ENCODE measurements at regions of chr3 and their contacts with region 1.

Region 1: DNA sequence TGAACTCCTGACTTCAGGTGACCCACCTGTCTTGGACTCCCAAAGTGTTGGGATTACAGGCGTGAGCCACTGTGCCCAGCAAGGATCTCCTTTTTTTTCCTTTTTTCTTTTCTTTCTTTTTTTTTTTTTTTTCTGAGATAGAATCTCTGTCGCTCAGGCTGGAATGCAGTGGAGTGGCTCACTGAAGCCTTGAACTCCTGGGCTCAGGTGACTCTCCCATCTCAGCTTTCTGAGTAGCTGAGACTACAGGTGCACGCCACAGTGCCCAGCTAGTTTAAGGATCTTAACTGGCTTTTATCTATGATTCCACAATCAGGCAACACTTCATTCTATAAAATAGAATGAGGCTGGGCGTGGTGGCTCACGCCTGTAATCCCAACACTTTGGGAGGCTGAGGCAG is 16.3 kb upstream of the NICN1 start:
- DNase-seq: no peak
- H3K4me3 ChIP-seq: no peak overlapping the region
- H3K27ac ChIP-seq: no peak overlapping the region
- H3K4me1 ChIP-seq: no peaks in the 10 kb centered on the region
- H3K27me3 ChIP-seq: no peaks in the 10 kb centered on the region
- CTCF ChIP-seq: no peak

Region 2: DNA sequence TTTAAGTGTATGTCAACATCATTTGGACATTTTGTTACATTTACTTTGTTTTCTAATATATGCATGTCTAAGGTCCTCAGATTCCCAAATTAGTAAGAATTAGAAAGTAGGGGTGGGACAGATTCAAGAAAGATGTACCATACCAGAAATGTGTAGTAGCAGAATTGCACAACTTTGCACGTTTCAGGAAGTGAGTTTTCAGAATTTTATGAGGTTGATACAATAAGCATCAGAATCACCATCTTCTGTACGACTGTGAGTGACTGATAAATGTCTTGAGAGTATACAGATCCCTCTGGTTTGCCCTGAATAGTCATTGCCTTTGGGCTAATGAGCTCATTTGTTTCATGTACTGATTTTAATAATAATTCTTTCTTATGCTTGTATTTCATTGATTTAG is 517.5 kb before region 1 on chr3:
- CTCF ChIA-PET with region 1: no interaction called
- POLR2A ChIA-PET with region 1: no interaction called
- intact Hi-C with region 1: no loop called
- DNase-seq: peak; percentile 3
- H3K4me3 ChIP-seq: no peak overlapping the region
- H3K27ac ChIP-seq: no peak overlapping the region
- H3K4me1 ChIP-seq: peaks cover 7% of the 10 kb centered on the region
- H3K27me3 ChIP-seq: no peaks in the 10 kb centered on the region
- CTCF ChIP-seq: no peak

Region 3: DNA sequence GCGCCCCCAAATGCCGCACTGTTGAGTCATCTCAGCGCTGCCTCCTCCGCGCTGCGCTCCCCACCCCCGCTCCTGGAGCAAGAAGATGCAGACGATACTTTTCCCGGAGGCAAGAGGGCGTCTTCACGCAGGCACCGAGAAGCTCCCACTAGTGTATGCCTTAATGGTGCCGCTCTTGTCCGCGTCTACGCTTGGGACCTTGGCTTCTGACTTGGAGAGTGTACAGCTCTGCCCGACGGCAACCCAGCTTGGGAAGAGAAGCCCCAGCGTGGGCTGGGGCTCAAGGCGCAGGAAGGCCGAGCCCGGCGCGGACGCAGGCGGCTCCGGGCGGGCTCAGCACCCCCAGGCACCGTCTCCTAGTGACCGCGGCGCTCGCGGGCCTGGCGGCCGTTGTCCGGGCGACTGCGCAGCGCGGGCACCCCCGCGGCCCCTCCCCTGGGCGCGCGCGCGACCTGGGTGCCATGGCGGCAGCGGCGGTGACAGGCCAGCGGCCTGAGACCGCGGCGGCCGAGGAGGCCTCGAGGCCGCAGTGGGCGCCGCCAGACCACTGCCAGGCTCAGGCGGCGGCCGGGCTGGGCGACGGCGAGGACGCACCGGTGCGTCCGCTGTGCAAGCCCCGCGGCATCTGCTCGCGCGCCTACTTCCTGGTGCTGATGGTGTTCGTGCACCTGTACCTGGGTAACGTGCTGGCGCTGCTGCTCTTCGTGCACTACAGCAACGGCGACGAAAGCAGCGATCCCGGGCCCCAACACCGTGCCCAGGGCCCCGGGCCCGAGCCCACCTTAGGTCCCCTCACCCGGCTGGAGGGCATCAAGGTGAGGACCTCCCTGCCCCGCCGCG is 455.4 kb before region 1 on chr3 and contains the start of gene P4HTM:
- CTCF ChIA-PET with region 1: interaction called, 4 read pairs
- POLR2A ChIA-PET with region 1: no interaction called
- intact Hi-C with region 1: loop called (anchors 5 kb)
- DNase-seq: peak; percentile 85
- H3K4me3 ChIP-seq: peak within 1 kb of the TSS; percentile 64
- H3K27ac ChIP-seq: peak within 1 kb of the TSS; percentile 75
- H3K4me1 ChIP-seq: peaks cover 3% of the 10 kb centered on the region
- H3K27me3 ChIP-seq: no peaks in the 10 kb centered on the region
- CTCF ChIP-seq: peak; percentile 43
- total RNA-seq, gene P4HTM: 13.3 and 14.9 TPM in 2 replicates

Region 4: DNA sequence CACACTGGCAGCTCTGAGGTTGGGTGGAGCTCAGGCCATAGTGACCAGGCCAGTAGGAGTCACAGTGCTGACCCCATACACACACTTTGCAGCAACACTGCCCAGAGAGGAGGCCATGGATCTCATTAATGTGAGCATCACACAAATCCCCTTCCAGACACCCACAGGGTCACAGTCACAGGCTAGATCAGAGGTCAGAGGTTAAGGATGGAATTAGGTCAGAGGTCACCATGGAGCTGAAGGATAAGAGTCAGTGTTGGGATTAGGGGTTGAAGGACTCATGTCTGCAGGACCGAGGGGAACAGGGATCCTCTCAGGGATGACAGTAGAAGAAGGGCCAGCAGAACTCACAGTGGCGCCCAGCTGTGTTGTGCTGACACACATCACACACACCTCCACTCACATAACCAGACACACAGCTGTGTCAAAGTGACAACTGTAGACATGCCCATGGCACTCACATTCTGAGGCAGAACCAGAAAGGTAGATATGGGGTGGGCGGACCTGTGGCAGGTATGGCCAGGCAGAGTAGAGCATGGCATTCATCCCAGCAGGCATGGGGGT is 291.9 kb before region 1 on chr3:
- CTCF ChIA-PET with region 1: no interaction called
- POLR2A ChIA-PET with region 1: no interaction called
- intact Hi-C with region 1: no loop called
- DNase-seq: no peak
- H3K4me3 ChIP-seq: no peak overlapping the region
- H3K27ac ChIP-seq: no peak overlapping the region
- H3K4me1 ChIP-seq: no peaks in the 10 kb centered on the region
- H3K27me3 ChIP-seq: no peaks in the 10 kb centered on the region
- CTCF ChIP-seq: no peak

Region 5: DNA sequence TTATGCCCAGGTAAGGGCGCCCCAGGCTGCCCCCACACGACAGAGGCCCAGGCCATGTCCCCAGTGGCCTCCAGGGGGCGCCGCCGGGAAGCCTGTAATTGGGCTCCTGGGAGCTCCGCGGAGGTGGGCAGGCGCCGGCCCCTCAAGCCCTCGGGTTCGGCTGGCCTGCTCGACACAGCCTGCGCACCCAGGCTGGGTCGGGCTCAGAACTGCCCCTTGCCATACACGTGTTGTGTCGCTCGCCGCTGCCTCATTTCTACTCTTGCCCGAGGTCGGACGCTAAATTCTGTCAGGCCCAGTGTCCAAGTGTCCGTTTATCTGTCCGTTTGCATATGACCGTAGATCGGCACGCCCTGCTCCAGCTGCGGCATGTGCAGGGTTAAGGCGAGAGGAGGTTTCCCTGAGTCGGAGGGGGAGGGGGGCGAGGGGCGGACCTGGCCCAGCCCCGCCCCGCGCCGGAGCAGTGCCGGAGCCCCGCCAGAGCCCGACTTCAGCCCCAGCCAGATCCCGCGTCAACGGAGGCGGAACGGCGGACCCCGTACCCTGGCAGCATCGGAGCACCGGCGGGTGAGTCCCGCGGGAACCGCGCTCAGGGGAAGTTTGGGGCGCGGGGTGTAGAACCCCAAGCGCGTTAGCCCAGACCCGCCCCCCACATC is 274.1 kb before region 1 on chr3 and contains the start of gene KLHDC8B:
- CTCF ChIA-PET with region 1: no interaction called
- POLR2A ChIA-PET with region 1: no interaction called
- intact Hi-C with region 1: loop called (anchors 10 kb)
- DNase-seq: peak; percentile 62
- H3K4me3 ChIP-seq: peak within 1 kb of the TSS; percentile 58
- H3K27ac ChIP-seq: peak within 1 kb of the TSS; percentile 63
- H3K4me1 ChIP-seq: no peaks in the 10 kb centered on the region
- H3K27me3 ChIP-seq: no peaks in the 10 kb centered on the region
- CTCF ChIP-seq: peak; percentile 74
- total RNA-seq, gene KLHDC8B: 5.1 and 6.9 TPM in 2 replicates

Region 6: DNA sequence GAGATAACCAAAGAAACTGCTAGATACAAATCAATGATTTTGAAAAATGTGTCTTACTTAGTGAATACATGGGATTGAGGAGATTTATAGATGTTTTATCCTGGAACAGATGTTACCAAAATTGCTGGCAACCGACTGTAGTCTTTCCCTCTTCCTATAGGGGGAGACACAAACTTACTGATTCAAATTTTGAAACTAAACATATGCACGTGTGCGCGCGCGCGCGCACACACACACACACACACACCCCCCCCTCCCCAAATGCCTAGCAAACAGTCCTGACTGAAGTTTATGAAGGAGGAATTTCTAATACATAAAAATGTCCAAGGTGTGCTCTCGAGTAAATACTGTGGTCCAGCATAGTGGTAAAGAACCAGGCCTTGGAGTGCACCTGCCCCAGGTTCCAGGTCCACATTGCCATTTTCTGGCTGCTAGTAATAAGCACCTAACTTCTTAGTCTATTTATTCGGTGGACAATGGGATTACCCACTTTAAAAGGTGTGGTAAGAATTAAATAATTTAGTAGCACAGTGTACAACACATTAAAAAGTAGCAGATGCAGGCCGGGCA is 149.8 kb before region 1 on chr3:
- CTCF ChIA-PET with region 1: interaction called, 4 read pairs
- POLR2A ChIA-PET with region 1: no interaction called
- intact Hi-C with region 1: loop called (anchors 10 kb)
- DNase-seq: peak; percentile 37
- H3K4me3 ChIP-seq: no peak overlapping the region
- H3K27ac ChIP-seq: no peak overlapping the region
- H3K4me1 ChIP-seq: no peaks in the 10 kb centered on the region
- H3K27me3 ChIP-seq: no peaks in the 10 kb centered on the region
- CTCF ChIP-seq: peak; percentile 56

Region 7: GRCh38 chr3:49339945-49340800 is 105.2 kb before region 1 on chr3 and contains the start of gene USP4:
- CTCF ChIA-PET with region 1: interaction called, 8 read pairs
- POLR2A ChIA-PET with region 1: no interaction called
- intact Hi-C with region 1: loop called (anchors 5 kb)
- DNase-seq: peak; percentile 80
- H3K4me3 ChIP-seq: peak within 1 kb of the TSS; percentile 63
- H3K27ac ChIP-seq: peak within 1 kb of the TSS; percentile 74
- H3K4me1 ChIP-seq: peaks cover 5% of the 10 kb centered on the region
- H3K27me3 ChIP-seq: no peaks in the 10 kb centered on the region
- CTCF ChIP-seq: peak; percentile 52
- total RNA-seq, gene USP4: 32.3 and 32.8 TPM in 2 replicates

Measured in A673 (cell line).